HepG2 (cell line): ENCODE measurements at regions of chr1 and their contacts with region 1.

Region 1: GRCh38 chr1:24909388-24909898 is 20.6 kb downstream of the RUNX3 start:
- DNase-seq: peak; percentile 76
- ATAC-seq: peak; percentile 57
- H3K4me3 ChIP-seq: no peak overlapping the region; a peak in 1 of 6 replicates
- H3K27ac ChIP-seq: peak overlapping the region; percentile 34
- H3K4me1 ChIP-seq: peaks cover 60% of the 10 kb centered on the region
- H3K27me3 ChIP-seq: no peaks in the 10 kb centered on the region
- CTCF ChIP-seq: peak; percentile 74
- EP300 ChIP-seq: no peak
- POLR2A ChIP-seq: no peak
- RAD21 ChIP-seq: peak; percentile 49; the same call in 1 of the 2 replicates

Region 2: GRCh38 chr1:24970399-24970753 is 60.9 kb after region 1 on chr1:
- CTCF ChIA-PET with region 1: no interaction called
- POLR2A ChIA-PET with region 1: no interaction called
- in situ Hi-C with region 1: no loop called
- intact Hi-C with region 1: loop called (anchors 2 kb)
- DNase-seq: peak; percentile 28
- ATAC-seq: peak; percentile 88
- H3K4me3 ChIP-seq: no peak overlapping the region
- H3K27ac ChIP-seq: no peak overlapping the region
- H3K4me1 ChIP-seq: peaks cover 8% of the 10 kb centered on the region; the same call in 1 of the 2 replicates
- H3K27me3 ChIP-seq: peaks cover 2 to 25% of the 10 kb centered on the region in 2 experiments; a peak in 1 of 5 replicates
- CTCF ChIP-seq: peak; percentile 31; the same call in 1 of the 2 replicates
- EP300 ChIP-seq: no peak
- POLR2A ChIP-seq: no peak
- RAD21 ChIP-seq: no peak